ENCODE measurements at regions of chr10 and their contacts with region 1.

Region 1: GRCh38 chr10:122142641-122143237 is 128.4 kb upstream of the BTBD16 start:
- DNase-seq: no peak
- ATAC-seq: peak; percentile 28; the same call in 1 of the 2 replicates
- H3K4me3 ChIP-seq: no peak overlapping the region
- H3K27ac ChIP-seq: no peak overlapping the region
- H3K4me1 ChIP-seq: peaks cover 25% of the 10 kb centered on the region
- H3K27me3 ChIP-seq: no peaks in the 10 kb centered on the region
- CTCF ChIP-seq: peak; percentile 63
- POLR2A ChIP-seq: no peak
- RAD21 ChIP-seq: peak; percentile 69

Region 2: DNA sequence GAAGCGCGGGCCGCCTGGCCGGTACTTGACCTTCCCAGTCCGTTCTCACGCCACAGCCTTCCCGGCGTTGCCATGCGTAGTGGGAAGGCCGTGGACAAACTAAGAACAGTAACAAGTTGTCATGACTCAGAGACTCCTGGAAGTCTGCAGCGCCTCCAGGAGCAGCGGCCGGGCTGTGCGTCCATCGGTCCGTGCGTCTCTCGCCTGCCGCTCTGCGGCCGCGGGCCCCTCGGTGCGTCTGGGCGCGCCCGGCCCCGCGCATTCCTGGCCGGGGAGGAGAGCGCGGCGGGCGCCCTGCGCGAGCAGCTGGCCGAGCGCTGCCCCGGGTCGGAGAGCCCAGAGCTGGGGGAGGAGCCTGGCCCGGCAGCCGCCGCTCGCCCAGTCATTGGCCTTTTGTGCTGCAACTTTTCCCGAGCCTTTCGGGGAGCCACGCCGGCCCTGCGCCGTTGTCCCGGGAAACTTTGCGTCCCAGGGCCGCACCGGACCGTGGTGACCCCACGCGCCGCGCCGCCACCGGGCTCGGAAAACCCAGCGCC is 30.0 kb before region 1 on chr10:
- CTCF ChIA-PET with region 1: interaction called, 4 read pairs
- POLR2A ChIA-PET with region 1: no interaction called
- dilution Hi-C with region 1: no loop called
- in situ Hi-C with region 1: no loop called
- intact Hi-C with region 1: loop called (anchors 2 kb)
- DNase-seq: peak; percentile 96
- ATAC-seq: peak; percentile 91
- H3K4me3 ChIP-seq: peak overlapping the region; percentile 70
- H3K27ac ChIP-seq: peak overlapping the region; percentile 65
- H3K4me1 ChIP-seq: peaks cover 10% of the 10 kb centered on the region
- H3K27me3 ChIP-seq: no peaks in the 10 kb centered on the region
- CTCF ChIP-seq: peak; percentile 76
- POLR2A ChIP-seq: peak; percentile 48; the same call in 1 of the 2 replicates
- RAD21 ChIP-seq: peak; percentile 71

Region 3: DNA sequence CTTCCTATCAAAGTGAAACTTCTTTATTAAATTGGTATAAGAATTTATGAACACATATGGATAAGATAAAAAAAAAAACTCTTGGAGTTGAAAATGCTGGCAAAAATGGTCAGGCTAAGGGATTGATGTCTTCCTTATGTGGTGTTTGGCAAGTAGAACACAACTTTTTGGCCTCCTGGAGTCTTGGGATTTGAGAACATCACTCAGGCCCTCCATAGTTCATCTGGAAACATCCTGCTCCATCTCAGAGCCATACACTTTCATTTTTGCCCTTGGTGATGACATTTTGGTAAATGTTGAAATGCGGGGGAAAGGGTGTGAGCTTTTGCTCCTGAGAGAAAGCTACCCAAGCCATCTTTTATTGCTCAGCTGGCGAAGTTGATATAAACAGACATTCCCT is 100.8 kb after region 1 on chr10:
- CTCF ChIA-PET with region 1: no interaction called
- POLR2A ChIA-PET with region 1: no interaction called
- dilution Hi-C with region 1: no loop called
- in situ Hi-C with region 1: no loop called
- intact Hi-C with region 1: no loop called
- DNase-seq: no peak
- ATAC-seq: no peak
- H3K4me3 ChIP-seq: no peak overlapping the region
- H3K27ac ChIP-seq: no peak overlapping the region
- H3K4me1 ChIP-seq: no peaks in the 10 kb centered on the region
- H3K27me3 ChIP-seq: no peaks in the 10 kb centered on the region
- CTCF ChIP-seq: no peak
- POLR2A ChIP-seq: no peak
- RAD21 ChIP-seq: no peak

Region 4: DNA sequence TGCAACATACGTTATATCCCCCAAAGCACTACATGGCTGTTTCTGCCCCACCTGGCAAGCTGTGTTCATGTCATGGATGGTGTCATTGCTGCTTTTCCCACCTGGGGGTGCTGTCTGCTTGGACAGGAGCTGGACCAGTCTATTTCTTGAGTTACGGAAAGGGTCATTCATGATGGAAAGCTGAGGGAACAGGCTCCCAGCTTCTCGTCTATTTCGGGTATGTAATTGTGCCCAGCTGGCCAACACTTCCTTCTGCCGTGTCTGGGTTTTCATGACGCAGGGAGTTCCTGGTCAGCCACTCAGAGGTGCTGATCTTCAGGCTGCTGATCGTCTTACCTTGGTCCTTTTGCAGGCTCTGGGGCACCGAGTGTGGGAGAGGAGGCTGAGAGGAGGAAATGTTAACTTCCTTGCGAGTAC is 137.0 kb after region 1 on chr10:
- CTCF ChIA-PET with region 1: interaction called, 3 read pairs
- POLR2A ChIA-PET with region 1: no interaction called
- dilution Hi-C with region 1: no loop called
- in situ Hi-C with region 1: no loop called
- intact Hi-C with region 1: loop called (anchors 5 kb)
- DNase-seq: peak; percentile 28
- ATAC-seq: no peak
- H3K4me3 ChIP-seq: no peak overlapping the region
- H3K27ac ChIP-seq: no peak overlapping the region
- H3K4me1 ChIP-seq: peaks cover 7% of the 10 kb centered on the region
- H3K27me3 ChIP-seq: no peaks in the 10 kb centered on the region
- CTCF ChIP-seq: peak; percentile 52
- POLR2A ChIP-seq: no peak
- RAD21 ChIP-seq: peak; percentile 47

Region 5: GRCh38 chr10:122435212-122435827 is 292.6 kb after region 1 on chr10:
- CTCF ChIA-PET with region 1: no interaction called
- POLR2A ChIA-PET with region 1: no interaction called
- dilution Hi-C with region 1: no loop called
- in situ Hi-C with region 1: no loop called
- intact Hi-C with region 1: loop called (anchors 5 kb)
- DNase-seq: peak; percentile 55
- ATAC-seq: peak; percentile 46
- H3K4me3 ChIP-seq: no peak overlapping the region
- H3K27ac ChIP-seq: no peak overlapping the region
- H3K4me1 ChIP-seq: no peaks in the 10 kb centered on the region
- H3K27me3 ChIP-seq: no peaks in the 10 kb centered on the region
- CTCF ChIP-seq: peak; percentile 78
- POLR2A ChIP-seq: no peak
- RAD21 ChIP-seq: peak; percentile 85

Region 6: GRCh38 chr10:122617476-122618270 is 474.9 kb after region 1 on chr10:
- CTCF ChIA-PET with region 1: no interaction called
- POLR2A ChIA-PET with region 1: no interaction called
- dilution Hi-C with region 1: no loop called
- in situ Hi-C with region 1: no loop called
- intact Hi-C with region 1: no loop called
- DNase-seq: no peak
- ATAC-seq: no peak
- H3K4me3 ChIP-seq: no peak overlapping the region
- H3K27ac ChIP-seq: no peak overlapping the region
- H3K4me1 ChIP-seq: no peaks in the 10 kb centered on the region
- H3K27me3 ChIP-seq: no peaks in the 10 kb centered on the region
- CTCF ChIP-seq: no peak
- POLR2A ChIP-seq: no peak
- RAD21 ChIP-seq: no peak

Region 7: DNA sequence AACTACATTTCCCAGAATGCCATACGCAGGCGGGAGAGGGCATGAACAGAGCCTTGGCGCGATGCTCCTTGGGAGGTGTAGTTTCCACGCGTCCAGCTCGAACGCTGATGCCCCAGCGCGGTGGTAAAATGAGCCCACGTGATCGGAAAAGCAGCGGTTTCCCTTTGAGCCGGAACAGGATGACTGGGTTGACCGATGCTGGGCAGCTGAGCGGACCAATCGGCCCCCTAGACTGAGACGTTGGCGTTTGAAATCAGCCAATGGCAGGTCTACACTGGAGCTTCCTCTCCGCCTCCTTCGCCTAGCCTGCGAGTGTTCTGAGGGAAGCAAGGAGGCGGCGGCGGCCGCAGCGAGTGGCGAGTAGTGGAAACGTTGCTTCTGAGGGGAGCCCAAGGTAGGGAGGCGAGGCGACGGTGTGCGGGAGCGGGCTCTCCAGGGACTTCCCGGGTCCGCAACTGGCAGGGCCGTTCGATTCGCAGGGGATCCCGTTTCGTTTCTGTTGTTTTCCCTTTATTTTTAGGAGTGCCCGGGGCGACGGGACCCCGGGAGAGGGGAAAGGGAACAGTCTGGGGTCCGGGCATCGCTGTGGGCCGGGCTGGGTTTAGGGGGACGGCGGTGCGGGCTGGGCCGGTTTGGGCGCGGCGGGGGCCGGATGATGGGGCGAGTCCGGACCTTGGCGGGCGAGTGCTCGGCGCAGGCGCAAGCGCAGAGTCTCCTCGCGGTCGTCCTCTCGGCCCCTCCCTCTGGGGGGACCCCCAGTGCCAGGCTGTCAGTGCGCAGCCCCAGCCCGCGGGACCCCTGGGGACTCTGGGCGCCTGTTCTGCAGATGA is 1011.6 kb after region 1 on chr10 and contains the start of gene BUB3:
- CTCF ChIA-PET with region 1: no interaction called
- POLR2A ChIA-PET with region 1: no interaction called
- dilution Hi-C with region 1: no loop called
- in situ Hi-C with region 1: loop called (anchors 25 kb)
- intact Hi-C with region 1: no loop called
- DNase-seq: peak; percentile 100
- ATAC-seq: peak; percentile 94
- H3K4me3 ChIP-seq: peak within 1 kb of the TSS; percentile 79
- H3K27ac ChIP-seq: peak within 1 kb of the TSS; percentile 75
- H3K4me1 ChIP-seq: peaks cover 1% of the 10 kb centered on the region
- H3K27me3 ChIP-seq: peaks cover 28% of the 10 kb centered on the region
- CTCF ChIP-seq: no peak
- POLR2A ChIP-seq: peak; percentile 94
- RAD21 ChIP-seq: no peak
- total RNA-seq, gene BUB3: 346 and 384 TPM in 2 replicates

Measured in IMR-90 (cell line).